ENCODE measurements at regions of chr3 and their contacts with region 1.

Region 1: GRCh38 chr3:13901935-13902584 is 22.2 kb upstream of the WNT7A start:
- DNase-seq: no peak
- H3K4me3 ChIP-seq: no peak overlapping the region
- H3K27ac ChIP-seq: no peak overlapping the region
- H3K4me1 ChIP-seq: peaks cover 0 to under 1% (median 0%) of the 10 kb centered on the region in 4 donors
- H3K27me3 ChIP-seq: no peaks in the 10 kb centered on the region
- CTCF ChIP-seq: no peak

Region 2: GRCh38 chr3:13801361-13802214 is 100.5 kb before region 1 on chr3:
- intact Hi-C with region 1: no loop called
- DNase-seq: no peak
- H3K4me3 ChIP-seq: no peak overlapping the region
- H3K27ac ChIP-seq: no peak overlapping the region
- H3K4me1 ChIP-seq: no peaks in the 10 kb centered on the region
- H3K27me3 ChIP-seq: peaks cover 0 to 24% of the 10 kb centered on the region in 2 donors
- CTCF ChIP-seq: no peak

Region 3: GRCh38 chr3:14113965-14114635 is 212.0 kb after region 1 on chr3:
- intact Hi-C with region 1: loop called (anchors 10 kb)
- DNase-seq: no peak
- H3K4me3 ChIP-seq: no peak overlapping the region
- H3K27ac ChIP-seq: no peak overlapping the region
- H3K4me1 ChIP-seq: no peaks in the 10 kb centered on the region
- H3K27me3 ChIP-seq: no peaks in the 10 kb centered on the region
- CTCF ChIP-seq: no peak

Region 4: DNA sequence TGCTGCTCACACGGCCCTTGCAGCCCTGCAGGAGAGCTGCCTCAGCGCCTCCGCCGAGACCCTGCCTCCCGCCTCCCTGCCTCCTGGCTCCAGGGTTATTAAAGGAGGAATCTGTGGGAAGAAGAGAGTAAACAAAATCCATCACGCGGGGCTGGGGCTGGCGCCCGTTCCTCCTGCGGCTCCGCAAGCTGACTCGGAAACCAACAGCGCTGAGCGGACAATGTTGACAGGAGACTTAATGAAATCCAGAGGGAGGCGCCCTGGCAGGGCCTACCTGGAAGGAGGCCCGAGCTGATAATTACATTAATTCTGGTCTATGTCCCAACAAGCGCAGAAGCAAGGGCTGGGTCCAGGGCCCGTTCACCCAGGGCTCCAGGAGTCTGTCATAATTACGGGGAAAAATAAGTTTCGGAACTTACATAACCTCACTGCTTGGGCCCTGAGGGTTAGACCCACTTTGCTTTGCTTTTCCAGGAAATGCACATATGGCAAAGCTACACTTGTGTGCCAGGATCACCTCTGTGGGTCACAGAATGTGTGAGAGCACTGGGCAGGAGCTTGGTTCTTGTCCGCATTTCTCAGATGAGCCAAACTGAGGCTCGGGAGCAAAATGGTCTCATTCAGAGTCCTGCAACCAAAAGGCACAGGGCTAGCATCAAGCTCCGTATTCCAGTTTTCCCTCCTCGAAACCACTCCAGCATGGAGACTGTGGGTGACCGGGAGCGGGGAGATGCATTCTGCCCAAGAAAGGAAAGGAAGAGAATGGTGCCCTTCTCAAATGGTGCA is 456.6 kb after region 1 on chr3:
- intact Hi-C with region 1: no loop called
- DNase-seq: peak; percentile 70 to 76
- H3K4me3 ChIP-seq: no peak overlapping the region
- H3K27ac ChIP-seq: no peak overlapping the region
- H3K4me1 ChIP-seq: peaks cover 0 to 3% (median 0%) of the 10 kb centered on the region in 4 donors
- H3K27me3 ChIP-seq: peaks cover 0 to 41% of the 10 kb centered on the region in 2 donors
- CTCF ChIP-seq: no peak

Measured in tibial artery (tissue), 4 donors.